ENCODE measurements at regions of chr18 and their contacts with region 1.

Region 1: DNA sequence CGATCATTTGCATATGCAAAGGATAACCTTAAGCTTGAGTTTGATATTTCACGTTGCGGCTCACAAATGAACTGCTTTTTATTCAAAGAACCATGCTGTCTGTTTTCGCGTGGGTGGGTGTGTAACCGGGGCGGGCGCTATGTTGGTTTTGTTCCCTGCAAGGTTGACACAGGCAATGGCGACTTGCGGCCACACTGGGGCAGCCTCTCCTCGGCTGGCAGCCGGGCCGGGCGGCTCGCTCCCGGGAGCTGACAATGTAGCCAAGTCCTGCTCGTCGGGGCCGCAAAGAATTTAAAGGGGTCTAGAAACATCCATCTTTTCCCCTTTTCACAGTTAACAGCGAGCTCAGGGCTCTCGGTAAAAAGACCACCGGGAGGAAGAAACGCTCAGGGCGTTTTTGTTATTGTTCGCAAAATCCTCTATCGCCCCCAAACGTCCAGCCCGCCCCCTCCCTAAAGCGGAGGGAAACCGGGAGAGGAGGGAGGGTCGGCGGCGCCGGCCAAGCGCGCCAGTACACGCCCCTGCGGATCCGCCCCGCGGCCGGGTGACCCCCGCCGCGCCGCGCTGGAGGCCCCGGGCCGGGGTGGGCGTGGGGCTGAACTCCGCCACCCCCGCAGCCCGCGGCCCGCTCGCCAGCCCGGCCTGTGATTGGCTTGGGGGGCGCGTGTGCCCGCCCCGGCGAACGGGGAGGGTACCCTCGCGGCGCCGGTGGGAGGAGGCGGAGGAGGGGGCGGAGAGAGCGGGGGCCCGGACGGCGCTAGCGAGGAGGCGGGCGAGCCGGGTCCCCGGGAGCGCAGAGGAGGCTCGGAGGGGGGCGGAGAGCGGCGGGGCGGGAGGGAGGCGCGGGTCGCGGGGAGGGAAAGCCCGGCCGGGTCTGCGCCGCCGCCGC is at the start of gene NEDD4L:
- DNase-seq: peak; percentile 76 to 88
- ATAC-seq: peak; percentile 87 to 94 (median 90)
- H3K4me3 ChIP-seq: peak within 1 kb of the TSS; percentile 92
- H3K27ac ChIP-seq: peak within 1 kb of the TSS; percentile 73
- H3K4me1 ChIP-seq: no peaks in the 10 kb centered on the region
- H3K27me3 ChIP-seq: no peaks in the 10 kb centered on the region
- CTCF ChIP-seq: peak; percentile 85
- total RNA-seq, gene NEDD4L: 19.6 to 28.0 (median 21.5) TPM

Region 2: DNA sequence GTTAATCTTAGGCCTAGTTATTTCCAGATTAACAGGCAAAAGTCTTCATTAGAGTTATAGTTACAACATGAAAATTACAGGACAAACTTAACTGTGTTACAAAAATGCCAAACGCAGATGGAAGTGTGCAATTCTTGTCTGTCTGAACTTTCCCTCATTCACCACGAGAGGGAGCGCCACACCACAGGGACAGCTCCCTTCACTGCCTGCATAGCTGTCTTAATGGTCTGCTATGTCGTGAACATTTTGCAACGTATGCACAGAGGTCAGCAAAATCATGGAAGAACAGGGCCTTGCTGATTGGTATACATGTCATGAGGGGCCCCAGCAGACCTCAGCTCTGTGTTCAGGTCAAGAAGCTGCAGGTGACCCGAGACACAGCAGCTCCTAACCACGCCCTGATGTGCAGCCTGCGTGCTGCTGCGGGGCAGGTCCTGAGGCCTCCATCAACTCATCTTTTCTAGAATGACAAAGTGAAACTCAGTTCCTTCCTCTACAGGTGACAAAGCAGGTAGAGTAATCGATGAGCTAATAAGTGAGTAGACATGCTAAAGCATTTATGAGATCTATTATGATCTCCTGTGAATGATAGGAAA is 161.8 kb before region 1 on chr18:
- intact Hi-C with region 1: loop called in 1 of 2 experiments (anchors 5 kb)
- DNase-seq: peak; percentile 52 to 59
- ATAC-seq: peak; percentile 73 to 84 (median 82)
- H3K4me3 ChIP-seq: no peak overlapping the region
- H3K27ac ChIP-seq: no peak overlapping the region
- H3K4me1 ChIP-seq: no peaks in the 10 kb centered on the region
- H3K27me3 ChIP-seq: no peaks in the 10 kb centered on the region
- CTCF ChIP-seq: peak; percentile 88

Region 3: DNA sequence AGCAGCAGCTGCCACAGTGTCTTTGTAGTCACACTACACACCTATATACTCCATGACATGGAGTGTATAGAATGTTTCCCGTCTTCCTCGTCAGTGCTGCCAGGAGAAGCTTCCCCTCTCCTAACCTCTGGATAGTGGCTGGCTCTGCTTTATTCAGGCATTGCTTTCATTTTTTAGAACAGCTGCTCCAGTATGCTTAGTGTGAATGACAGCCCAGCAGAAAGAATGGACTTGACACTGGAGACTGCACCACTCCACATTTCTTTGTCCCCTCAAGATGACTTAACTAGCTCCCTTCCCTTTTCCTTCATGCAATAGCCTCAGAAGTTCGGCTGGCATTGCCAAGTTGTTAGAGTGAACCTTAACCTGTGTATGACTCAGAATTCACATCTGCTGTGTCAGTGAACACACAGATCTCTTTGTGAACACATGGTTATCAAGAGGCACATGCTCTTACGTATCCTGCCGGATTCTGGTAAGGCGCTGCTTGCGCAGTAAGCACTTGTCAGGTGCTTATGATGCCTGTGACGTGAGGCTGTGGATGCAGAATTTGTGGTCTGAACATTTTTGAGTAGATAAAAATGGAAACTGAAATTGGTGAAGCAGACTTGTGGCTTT is 74.2 kb after region 1 on chr18:
- intact Hi-C with region 1: loop called (anchors 2 to 5 kb)
- DNase-seq: no peak
- ATAC-seq: peak in 3 of 4 donors; percentile 41 to 61 (median 43)
- H3K4me3 ChIP-seq: no peak overlapping the region
- H3K27ac ChIP-seq: no peak overlapping the region
- H3K4me1 ChIP-seq: no peaks in the 10 kb centered on the region
- H3K27me3 ChIP-seq: no peaks in the 10 kb centered on the region
- CTCF ChIP-seq: no peak

Region 4: GRCh38 chr18:58180738-58181353 is 137.1 kb after region 1 on chr18:
- intact Hi-C with region 1: loop called in 1 of 2 experiments (anchors 5 kb)
- DNase-seq: no peak
- ATAC-seq: peak; percentile 57 to 72 (median 66)
- H3K4me3 ChIP-seq: no peak overlapping the region
- H3K27ac ChIP-seq: no peak overlapping the region
- H3K4me1 ChIP-seq: peaks cover 6% of the 10 kb centered on the region
- H3K27me3 ChIP-seq: no peaks in the 10 kb centered on the region
- CTCF ChIP-seq: peak; percentile 89

Region 5: DNA sequence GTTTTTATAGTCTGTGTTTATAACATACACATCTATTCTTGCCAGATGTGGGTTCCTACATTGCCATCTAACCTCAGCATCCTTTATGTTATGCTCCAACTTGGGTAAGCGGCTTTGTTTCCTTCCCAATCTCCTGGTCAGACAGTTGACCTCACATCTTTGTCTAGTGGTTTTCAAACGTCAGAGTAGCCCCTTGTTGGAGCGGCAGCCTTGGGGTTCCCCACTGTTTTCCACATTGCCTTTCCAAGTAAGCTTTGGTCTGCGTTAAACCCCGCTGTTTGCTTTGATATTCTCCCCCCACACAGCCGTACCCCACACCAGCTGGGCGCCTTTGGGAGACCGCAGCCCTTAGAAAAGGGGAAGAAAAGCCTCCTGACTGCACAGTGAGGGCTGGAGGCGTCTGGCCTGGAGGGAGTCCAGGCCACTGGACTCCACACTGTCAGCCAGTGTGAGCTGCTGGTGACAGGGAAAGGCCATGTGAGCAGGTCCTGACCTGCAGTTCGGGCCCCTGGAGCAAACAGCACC is 710.9 kb after region 1 on chr18:
- intact Hi-C with region 1: no loop called
- DNase-seq: peak in 1 of 2 donors; percentile 59
- ATAC-seq: peak; percentile 69 to 85 (median 80)
- H3K4me3 ChIP-seq: no peak overlapping the region
- H3K27ac ChIP-seq: peak overlapping the region; percentile 71
- H3K4me1 ChIP-seq: peaks cover 24% of the 10 kb centered on the region
- H3K27me3 ChIP-seq: no peaks in the 10 kb centered on the region
- CTCF ChIP-seq: no peak